WTC11 (cell line): ENCODE measurements at regions of chr5 and their contacts with region 1.

Region 1: GRCh38 chr5:79020861-79021561 is 35.9 kb upstream of the ARSB start:
- DNase-seq: peak; percentile 64
- ATAC-seq: peak; percentile 83
- H3K4me3 Mint-ChIP-seq: peak overlapping the region; percentile 48
- H3K27ac Mint-ChIP-seq: no peak overlapping the region
- H3K4me1 Mint-ChIP-seq: peaks cover 20% of the 10 kb centered on the region
- H3K27me3 Mint-ChIP-seq: no peaks in the 10 kb centered on the region; the same call in 1 of the 2 replicates
- CTCF ChIP-seq: peak; percentile 51; the same call in 1 of the 2 replicates

Region 2: GRCh38 chr5:78984439-78985115 is 36.4 kb before region 1 on chr5:
- CTCF ChIA-PET with region 1: interaction called, 14 read pairs
- POLR2A ChIA-PET with region 1: no interaction called
- DNase-seq: peak; percentile 84
- ATAC-seq: peak; percentile 92
- H3K4me3 Mint-ChIP-seq: peak overlapping the region; percentile 75
- H3K27ac Mint-ChIP-seq: peak overlapping the region; percentile 92; the same call in 1 of the 2 replicates
- H3K4me1 Mint-ChIP-seq: peaks cover 28% of the 10 kb centered on the region
- H3K27me3 Mint-ChIP-seq: peaks cover 10% of the 10 kb centered on the region
- CTCF ChIP-seq: no peak

Region 3: DNA sequence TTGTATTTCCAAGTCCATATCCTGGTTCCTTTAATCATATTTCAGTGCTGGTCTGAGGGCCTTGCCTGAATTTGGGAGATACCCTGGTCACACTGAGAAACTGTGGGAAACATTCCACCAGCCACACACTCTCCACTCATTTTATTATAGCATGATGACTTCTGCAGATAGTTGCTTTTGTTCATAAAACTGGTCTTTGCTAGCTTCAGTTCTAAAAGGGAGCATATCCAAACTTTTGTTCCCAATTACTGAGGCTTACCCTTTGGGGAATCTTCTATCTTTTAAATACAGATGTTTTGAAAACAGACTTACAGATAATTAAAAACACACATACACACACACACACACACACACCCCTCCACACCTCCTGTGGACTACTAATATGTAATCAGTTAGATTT is 27.4 kb after region 1 on chr5:
- CTCF ChIA-PET with region 1: interaction called, 11 read pairs
- POLR2A ChIA-PET with region 1: no interaction called
- DNase-seq: no peak
- ATAC-seq: no peak
- H3K4me3 Mint-ChIP-seq: no peak overlapping the region
- H3K27ac Mint-ChIP-seq: no peak overlapping the region
- H3K4me1 Mint-ChIP-seq: no peaks in the 10 kb centered on the region
- H3K27me3 Mint-ChIP-seq: no peaks in the 10 kb centered on the region
- CTCF ChIP-seq: no peak

Region 4: GRCh38 chr5:79074641-79075040 is 53.6 kb after region 1 on chr5:
- CTCF ChIA-PET with region 1: interaction called, 10 read pairs
- POLR2A ChIA-PET with region 1: no interaction called
- DNase-seq: no peak
- ATAC-seq: no peak
- H3K4me3 Mint-ChIP-seq: no peak overlapping the region
- H3K27ac Mint-ChIP-seq: no peak overlapping the region
- H3K4me1 Mint-ChIP-seq: 0 out of 2 replicates have a peak, but pooled peaks cover 4% of the 10 kb centered on the region
- H3K27me3 Mint-ChIP-seq: no peaks in the 10 kb centered on the region
- CTCF ChIP-seq: no peak

Region 5: DNA sequence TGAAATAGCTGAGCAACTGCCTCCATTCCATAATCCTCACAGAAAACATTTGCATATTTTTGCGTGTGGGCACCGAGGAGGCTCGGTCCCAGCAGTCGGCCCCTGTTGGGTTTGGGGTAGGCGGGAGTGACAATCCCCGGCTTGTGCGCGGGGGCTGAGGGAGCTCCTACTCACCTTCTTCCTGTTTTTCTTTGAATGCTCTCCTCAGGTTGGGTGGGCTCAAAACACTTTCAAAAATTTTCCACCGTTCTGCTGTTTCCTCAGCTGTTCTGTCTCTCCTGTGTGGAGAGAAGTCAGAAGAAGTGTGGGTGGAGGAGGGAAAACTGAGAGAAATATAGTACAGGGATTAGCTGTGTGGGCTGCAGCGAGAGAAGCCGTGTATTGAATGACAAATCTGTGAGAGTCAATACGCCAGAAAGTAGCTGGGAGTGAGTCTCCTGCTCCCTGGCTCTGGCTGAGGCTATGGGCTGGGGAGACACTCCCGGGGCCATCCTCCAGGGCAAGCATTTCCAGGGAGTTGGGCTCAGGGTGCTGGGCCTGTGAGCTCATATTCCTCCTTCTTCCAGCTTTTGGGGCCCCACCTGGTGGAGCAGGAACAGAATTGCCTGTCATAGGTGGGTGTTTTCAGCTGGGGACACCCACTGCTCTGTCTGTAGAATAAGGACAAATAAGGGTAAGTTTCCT is 753.3 kb after region 1 on chr5:
- CTCF ChIA-PET with region 1: interaction called, 11 read pairs
- POLR2A ChIA-PET with region 1: no interaction called
- DNase-seq: peak; percentile 83
- ATAC-seq: peak; percentile 100
- H3K4me3 Mint-ChIP-seq: no peak overlapping the region; the same call in 1 of the 2 replicates
- H3K27ac Mint-ChIP-seq: peak overlapping the region; percentile 86
- H3K4me1 Mint-ChIP-seq: peaks cover 10% of the 10 kb centered on the region
- H3K27me3 Mint-ChIP-seq: peaks cover 3% of the 10 kb centered on the region; the same call in 1 of the 2 replicates
- CTCF ChIP-seq: peak; percentile 49; the same call in 1 of the 2 replicates